Naive thymus-derived CD4-positive, alpha-beta T cell (primary cell): ENCODE measurements at regions of chr20 and their contacts with region 1.

Region 1: DNA sequence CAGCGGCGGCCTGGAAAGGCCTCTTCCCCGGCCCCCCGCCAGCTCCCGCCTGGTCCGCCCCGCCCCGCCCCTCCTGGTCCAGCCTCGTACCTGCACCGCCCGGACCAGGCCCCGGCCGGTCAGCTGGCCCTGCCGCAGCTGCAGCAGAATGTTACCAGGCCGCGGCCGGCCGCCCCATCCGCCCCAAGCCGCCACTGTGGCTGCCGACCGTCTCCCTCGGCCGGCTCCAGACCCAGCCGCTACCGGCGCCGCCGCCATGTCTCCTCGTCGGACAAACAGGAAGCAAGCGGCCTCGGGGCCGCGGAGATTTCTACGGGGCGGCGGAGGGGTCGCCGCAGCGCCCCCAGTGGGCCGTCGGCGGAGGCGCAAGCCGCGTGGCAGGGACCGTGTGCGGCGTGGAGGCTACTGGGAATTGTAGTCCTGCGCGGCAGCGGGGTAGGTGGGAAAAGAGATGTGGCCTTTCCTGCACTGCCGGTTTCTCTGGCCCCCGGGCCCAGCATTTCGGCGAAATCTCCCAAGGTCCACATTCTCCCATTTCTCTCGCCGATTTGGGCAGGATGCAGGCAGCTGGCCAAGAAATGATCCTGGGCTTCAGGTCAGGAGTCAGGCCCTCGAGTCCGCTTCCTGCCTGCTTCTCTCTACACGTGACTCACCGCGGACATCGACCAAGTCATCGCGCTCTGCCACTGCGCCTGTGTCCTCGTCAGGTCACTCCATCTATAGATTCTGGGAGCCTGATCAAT is at the start of gene TRPC4AP:
- DNase-seq: peak; percentile 83 to 90 (median 87)
- ATAC-seq: peak; percentile 99
- H3K4me3 ChIP-seq: peak within 1 kb of the TSS; percentile 77
- H3K4me3 Mint-ChIP-seq: peak within 1 kb of the TSS; percentile 87 to 98 (median 90)
- H3K27ac ChIP-seq: peak within 1 kb of the TSS; percentile 89
- H3K27ac Mint-ChIP-seq: peak within 1 kb of the TSS; percentile 81 to 98 (median 94)
- H3K4me1 ChIP-seq: peaks cover 15 to 22% of the 10 kb centered on the region in 2 donors
- H3K4me1 Mint-ChIP-seq: peaks cover 27 to 54% (median 51%) of the 10 kb centered on the region in 7 donors
- H3K27me3 ChIP-seq: no peaks in the 10 kb centered on the region
- H3K27me3 Mint-ChIP-seq: no peaks in the 10 kb centered on the region
- total RNA-seq, gene TRPC4AP: 50.5 to 66.0 (median 60.6) TPM

Region 2: DNA sequence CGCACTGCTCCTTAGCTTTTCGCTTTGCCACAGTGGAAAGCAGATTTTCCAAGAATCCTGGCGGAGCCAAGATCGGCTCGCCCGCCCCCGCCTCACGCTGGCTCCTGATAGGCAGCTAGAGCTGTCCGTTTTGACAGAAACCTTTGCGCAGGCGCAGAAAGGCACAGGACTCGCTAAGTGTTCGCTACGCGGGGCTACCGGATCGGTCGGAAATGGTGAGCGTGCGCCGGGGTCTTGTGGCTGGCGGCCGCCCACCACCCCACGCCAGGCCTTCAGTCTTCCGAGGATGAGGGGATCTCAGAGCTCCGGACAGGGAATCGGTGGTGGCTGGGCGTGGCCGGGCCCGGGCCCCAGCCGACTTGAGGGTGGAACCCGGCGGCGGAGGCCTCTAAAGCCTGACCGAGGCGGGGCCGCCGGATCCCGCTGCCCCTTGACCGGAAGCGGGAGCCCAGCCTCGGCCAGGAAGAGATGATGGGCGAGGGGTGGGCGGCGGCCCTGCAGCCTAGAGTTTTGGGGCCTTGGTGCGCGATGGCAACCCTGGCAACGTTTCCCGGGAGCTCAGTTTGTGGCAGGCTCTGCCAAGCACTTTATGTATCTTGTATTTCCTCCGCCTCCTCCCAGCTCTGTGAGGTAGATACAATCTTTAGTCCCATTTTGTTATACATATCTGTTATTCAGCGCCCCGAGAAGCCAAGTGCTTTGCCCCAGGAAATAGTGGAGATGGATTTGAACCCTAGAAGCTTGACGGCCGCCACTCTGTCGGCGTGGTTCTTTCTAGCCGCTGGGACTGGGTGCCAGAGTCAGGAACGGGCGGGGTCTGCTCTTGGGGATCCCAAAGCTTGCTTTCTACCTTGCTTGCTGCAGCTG is 576.2 kb before region 1 on chr20 and contains the start of gene DYNLRB1:
- CTCF ChIA-PET with region 1: no interaction called
- POLR2A ChIA-PET with region 1: no interaction called
- intact Hi-C with region 1: loop called in 1 of 2 experiments (anchors 5 kb)
- DNase-seq: peak; percentile 87 to 94 (median 92)
- ATAC-seq: peak; percentile 88
- H3K4me3 ChIP-seq: peak within 1 kb of the TSS; percentile 96
- H3K4me3 Mint-ChIP-seq: peak within 1 kb of the TSS; percentile 97 to 100 (median 99)
- H3K27ac ChIP-seq: peak within 1 kb of the TSS; percentile 86
- H3K27ac Mint-ChIP-seq: peak within 1 kb of the TSS; percentile 94 to 99 (median 97)
- H3K4me1 ChIP-seq: peaks cover 8 to 11% of the 10 kb centered on the region in 2 donors
- H3K4me1 Mint-ChIP-seq: peaks cover 12 to 59% (median 51%) of the 10 kb centered on the region in 7 donors
- H3K27me3 ChIP-seq: no peaks in the 10 kb centered on the region
- H3K27me3 Mint-ChIP-seq: no peaks in the 10 kb centered on the region
- total RNA-seq, gene DYNLRB1: 45.9 to 91.9 (median 60.7) TPM

Region 3: DNA sequence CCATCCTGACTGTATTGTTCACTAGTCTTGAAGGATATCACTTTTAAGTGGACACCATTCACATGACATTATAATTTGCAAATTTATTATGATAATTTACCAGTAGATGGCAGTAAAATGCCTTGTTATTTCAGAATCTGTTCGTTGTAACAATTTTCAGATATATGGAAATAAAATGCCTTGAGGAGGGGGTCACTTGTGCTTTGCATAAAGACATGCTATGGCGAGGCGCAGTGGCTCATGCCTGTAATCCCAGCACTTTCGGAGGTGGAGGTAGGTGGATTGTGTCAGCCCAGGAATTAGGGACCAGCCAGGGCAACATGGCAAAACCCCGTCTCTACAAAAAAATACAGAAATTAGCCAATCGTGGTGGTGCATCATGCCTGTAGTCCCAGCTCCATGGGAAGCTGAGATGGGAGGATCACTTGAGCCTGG is 258.2 kb before region 1 on chr20:
- CTCF ChIA-PET with region 1: interaction called, 6 read pairs
- POLR2A ChIA-PET with region 1: no interaction called
- intact Hi-C with region 1: loop called in 1 of 2 experiments (anchors 1 kb)
- DNase-seq: peak in 6 of 9 donors; percentile 7 to 55 (median 42)
- ATAC-seq: peak; percentile 49
- H3K4me3 ChIP-seq: no peak overlapping the region
- H3K4me3 Mint-ChIP-seq: no peak overlapping the region
- H3K27ac ChIP-seq: no peak overlapping the region
- H3K27ac Mint-ChIP-seq: no peak overlapping the region
- H3K4me1 ChIP-seq: no peaks in the 10 kb centered on the region
- H3K4me1 Mint-ChIP-seq: peaks cover 0 to 6% (median 0%) of the 10 kb centered on the region in 7 donors
- H3K27me3 ChIP-seq: no peaks in the 10 kb centered on the region
- H3K27me3 Mint-ChIP-seq: peaks cover 10 to 48% (median 13%) of the 10 kb centered on the region in 5 donors

Region 4: GRCh38 chr20:35054814-35055213 is 37.9 kb before region 1 on chr20:
- CTCF ChIA-PET with region 1: no interaction called
- POLR2A ChIA-PET with region 1: no interaction called
- intact Hi-C with region 1: no loop called
- DNase-seq: no peak
- ATAC-seq: no peak
- H3K4me3 ChIP-seq: no peak overlapping the region
- H3K4me3 Mint-ChIP-seq: peak overlapping the region in 1 of 10 donors; percentile 8
- H3K27ac ChIP-seq: no peak overlapping the region
- H3K27ac Mint-ChIP-seq: peak overlapping the region in 2 of 9 donors; percentile 31
- H3K4me1 ChIP-seq: peaks cover 0 to 5% of the 10 kb centered on the region in 2 donors
- H3K4me1 Mint-ChIP-seq: peaks cover 15 to 35% (median 24%) of the 10 kb centered on the region in 7 donors
- H3K27me3 ChIP-seq: no peaks in the 10 kb centered on the region
- H3K27me3 Mint-ChIP-seq: no peaks in the 10 kb centered on the region

Region 5: GRCh38 chr20:35146920-35147574 is 54.4 kb after region 1 on chr20 and contains the start of gene EDEM2:
- CTCF ChIA-PET with region 1: interaction called, 6 read pairs
- POLR2A ChIA-PET with region 1: interaction called, 9 read pairs
- intact Hi-C with region 1: loop called (anchors 1 kb)
- DNase-seq: peak; percentile 87 to 94 (median 93)
- ATAC-seq: peak; percentile 88
- H3K4me3 ChIP-seq: peak within 1 kb of the TSS; percentile 88
- H3K4me3 Mint-ChIP-seq: peak within 1 kb of the TSS; percentile 90 to 99 (median 96)
- H3K27ac ChIP-seq: peak within 1 kb of the TSS; percentile 75
- H3K27ac Mint-ChIP-seq: peak within 1 kb of the TSS; percentile 82 to 96 (median 93)
- H3K4me1 ChIP-seq: peaks cover 12 to 14% of the 10 kb centered on the region in 2 donors
- H3K4me1 Mint-ChIP-seq: peaks cover 19 to 50% (median 35%) of the 10 kb centered on the region in 7 donors
- H3K27me3 ChIP-seq: no peaks in the 10 kb centered on the region
- H3K27me3 Mint-ChIP-seq: peaks cover 0 to 6% (median 0%) of the 10 kb centered on the region in 5 donors
- total RNA-seq, gene EDEM2: 15.4 to 30.9 (median 20.0) TPM

Region 6: DNA sequence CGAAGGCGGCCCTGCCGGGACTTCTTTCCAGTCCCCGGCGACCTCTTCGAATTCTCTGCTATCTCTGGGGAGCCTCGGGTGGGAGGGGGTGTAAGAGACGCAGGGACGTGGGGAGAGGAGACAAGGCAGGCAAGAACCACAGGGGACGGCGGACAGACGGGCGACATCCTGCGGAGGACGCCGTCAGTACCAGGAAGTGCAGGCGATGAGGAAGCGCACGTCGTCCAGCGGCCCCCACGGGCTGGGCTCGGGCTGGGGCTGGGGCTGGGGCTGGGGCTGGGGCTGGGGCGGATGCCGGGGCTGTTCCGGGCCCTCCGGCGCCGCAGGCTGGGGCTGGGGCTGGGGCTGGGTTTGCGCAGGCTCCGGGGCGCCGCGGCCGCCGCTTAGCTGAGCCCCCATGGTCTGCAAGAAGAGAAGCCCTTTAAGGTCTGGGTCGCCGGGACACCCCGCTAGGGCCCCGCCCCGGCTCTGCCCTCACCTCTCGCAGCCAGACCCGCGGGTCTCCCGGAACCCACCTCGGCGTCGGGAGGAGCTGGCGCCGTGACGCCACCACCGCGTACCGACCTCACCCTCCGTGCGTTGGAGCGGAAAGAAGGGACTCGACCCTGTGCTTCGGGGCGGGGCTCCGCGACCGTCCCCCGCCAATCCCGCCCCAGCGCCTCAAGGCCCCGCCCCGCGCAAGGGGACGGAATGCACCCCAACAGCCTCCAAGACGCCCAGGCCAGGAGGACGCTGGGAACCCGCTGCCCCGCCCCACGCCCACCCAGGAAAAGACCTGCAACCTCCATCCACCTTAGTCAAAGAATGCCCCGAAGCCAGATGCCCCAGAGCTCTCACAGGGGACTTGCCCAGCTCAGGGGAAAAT is 185.1 kb after region 1 on chr20 and contains the start of gene MMP24OS:
- CTCF ChIA-PET with region 1: no interaction called
- POLR2A ChIA-PET with region 1: interaction called, 4 read pairs
- intact Hi-C with region 1: loop called (anchors 1 to 2 kb)
- DNase-seq: peak; percentile 77 to 90 (median 87)
- ATAC-seq: peak; percentile 95
- H3K4me3 ChIP-seq: peak within 1 kb of the TSS; percentile 99
- H3K4me3 Mint-ChIP-seq: peak within 1 kb of the TSS; percentile 84 to 97 (median 96)
- H3K27ac ChIP-seq: peak within 1 kb of the TSS; percentile 96
- H3K27ac Mint-ChIP-seq: peak within 1 kb of the TSS; percentile 95 to 99 (median 98)
- H3K4me1 ChIP-seq: peaks cover 11 to 18% of the 10 kb centered on the region in 2 donors
- H3K4me1 Mint-ChIP-seq: peaks cover 9 to 46% (median 28%) of the 10 kb centered on the region in 7 donors
- H3K27me3 ChIP-seq: no peaks in the 10 kb centered on the region
- H3K27me3 Mint-ChIP-seq: no peaks in the 10 kb centered on the region
- total RNA-seq, gene MMP24OS: 43.8 to 88.6 (median 69.4) TPM

Region 7: DNA sequence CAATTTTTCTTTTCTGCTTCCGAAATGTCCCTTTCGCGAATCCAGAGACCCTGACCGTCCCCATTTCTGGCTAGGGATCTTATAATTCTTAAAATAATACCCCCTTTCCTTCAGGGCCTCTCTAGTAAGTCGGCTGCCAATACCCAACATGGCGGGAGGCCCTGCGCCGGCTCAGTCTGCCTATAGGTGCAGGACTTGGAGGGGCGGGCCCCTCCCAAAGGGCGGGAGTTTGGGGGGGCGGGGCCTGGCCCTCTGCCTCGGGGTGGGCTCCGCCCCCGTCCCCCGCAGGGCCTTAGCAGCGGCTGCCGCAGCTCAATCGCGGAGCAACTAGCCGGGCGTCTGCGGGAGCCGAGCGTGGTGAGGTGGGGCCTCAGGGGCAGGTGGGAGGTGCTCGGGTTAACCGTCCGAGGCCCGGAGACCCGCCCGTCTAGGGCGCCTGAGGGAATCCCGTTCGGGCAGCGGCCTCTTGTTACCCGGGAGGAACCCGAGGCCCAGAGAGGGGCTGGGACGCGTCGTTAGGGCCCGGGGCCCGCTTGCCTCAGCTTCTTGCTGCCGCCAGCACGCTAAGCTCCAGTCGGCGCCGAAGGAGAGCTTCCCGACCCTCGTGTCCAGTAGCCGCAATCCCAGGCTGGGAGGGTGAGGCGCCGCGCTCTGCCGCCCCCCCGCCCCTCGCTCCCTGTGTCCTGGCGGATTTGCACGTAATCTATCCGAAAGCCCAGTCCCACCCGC is 362.4 kb after region 1 on chr20 and contains the start of gene CEP250:
- CTCF ChIA-PET with region 1: no interaction called
- POLR2A ChIA-PET with region 1: interaction called, 3 read pairs
- intact Hi-C with region 1: loop called in 1 of 2 experiments (anchors 2 kb)
- DNase-seq: peak; percentile 89 to 97 (median 96)
- ATAC-seq: peak; percentile 99
- H3K4me3 ChIP-seq: peak within 1 kb of the TSS; percentile 94
- H3K4me3 Mint-ChIP-seq: peak within 1 kb of the TSS; percentile 82 to 98 (median 93)
- H3K27ac ChIP-seq: peak within 1 kb of the TSS; percentile 94
- H3K27ac Mint-ChIP-seq: peak within 1 kb of the TSS; percentile 86 to 99 (median 98)
- H3K4me1 ChIP-seq: no peaks in the 10 kb centered on the region
- H3K4me1 Mint-ChIP-seq: peaks cover 0 to 38% (median 23%) of the 10 kb centered on the region in 7 donors
- H3K27me3 ChIP-seq: no peaks in the 10 kb centered on the region
- H3K27me3 Mint-ChIP-seq: no peaks in the 10 kb centered on the region
- total RNA-seq, gene CEP250: 34.5 to 75.0 (median 70.7) TPM